ENCODE measurements at regions of chrX and their contacts with region 1.

Region 1: DNA sequence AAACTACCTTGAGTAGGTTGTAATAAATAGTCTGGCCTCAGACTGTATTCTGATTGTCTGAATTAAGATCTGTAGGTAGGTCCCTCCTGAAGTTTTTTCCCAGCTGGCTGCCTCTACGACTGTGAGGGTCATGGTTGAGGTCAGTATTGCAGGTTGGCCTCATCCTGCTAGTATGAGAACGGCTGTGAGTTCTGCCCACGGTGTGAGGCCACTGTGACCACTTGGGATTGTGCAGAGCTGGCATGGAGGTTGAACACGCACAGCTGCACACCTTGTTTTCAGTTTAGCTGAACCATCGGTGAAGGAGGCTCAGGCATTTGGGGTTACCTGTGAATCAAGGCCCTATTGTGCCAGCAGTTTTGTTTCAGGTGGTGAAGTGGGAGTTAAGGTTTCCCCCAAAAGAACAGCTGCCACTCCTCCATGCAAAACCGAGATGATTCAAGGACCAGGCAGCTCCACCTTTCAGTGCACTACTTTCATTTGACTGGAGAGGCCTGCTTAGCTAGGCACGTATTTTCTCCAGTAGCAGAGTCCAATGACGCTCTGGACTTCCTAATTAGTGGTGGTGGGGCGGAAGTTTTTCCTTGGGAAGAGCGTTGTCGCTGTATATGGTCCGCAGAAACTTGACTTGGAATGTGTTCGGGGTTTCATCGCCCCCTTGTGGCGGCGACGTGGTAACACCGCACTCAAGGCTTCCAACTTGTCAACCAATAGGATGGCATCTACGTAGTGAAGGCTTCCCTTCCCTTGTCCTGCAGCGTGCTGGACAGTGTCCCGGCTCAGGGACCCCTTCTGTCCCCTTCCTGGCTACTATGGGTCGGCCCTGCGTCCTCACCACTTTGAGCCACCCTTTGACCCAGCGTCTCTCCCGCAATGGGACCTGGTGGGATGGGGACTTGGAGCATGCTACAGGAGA is 13.8 kb downstream of the CMC4 start:
- DNase-seq: peak; percentile 41 to 80 (median 72)
- ATAC-seq: peak; percentile 85 to 95 (median 94)
- H3K4me3 ChIP-seq: no peak overlapping the region
- H3K27ac ChIP-seq: peak overlapping the region in 2 of 4 donors; percentile 20 to 39
- H3K4me1 ChIP-seq: peaks cover 0 to 18% (median 5%) of the 10 kb centered on the region in 3 donors
- H3K27me3 ChIP-seq: no peaks in the 10 kb centered on the region
- CTCF ChIP-seq: peak; percentile 75 to 86 (median 80)

Region 2: GRCh38 chrX:154980330-154981096 is 76.6 kb before region 1 on chrX:
- intact Hi-C with region 1: loop called in 1 of 3 experiments (anchors 10 kb)
- DNase-seq: peak; percentile 65 to 83 (median 74)
- ATAC-seq: peak; percentile 95 to 100 (median 99)
- H3K4me3 ChIP-seq: peak overlapping the region in 2 of 4 donors; percentile 19 to 22
- H3K27ac ChIP-seq: no peak overlapping the region
- H3K4me1 ChIP-seq: no peaks in the 10 kb centered on the region
- H3K27me3 ChIP-seq: no peaks in the 10 kb centered on the region
- CTCF ChIP-seq: peak; percentile 41 to 64 (median 48)